ENCODE measurements at regions of chr2 and their contacts with region 1.

Region 1: DNA sequence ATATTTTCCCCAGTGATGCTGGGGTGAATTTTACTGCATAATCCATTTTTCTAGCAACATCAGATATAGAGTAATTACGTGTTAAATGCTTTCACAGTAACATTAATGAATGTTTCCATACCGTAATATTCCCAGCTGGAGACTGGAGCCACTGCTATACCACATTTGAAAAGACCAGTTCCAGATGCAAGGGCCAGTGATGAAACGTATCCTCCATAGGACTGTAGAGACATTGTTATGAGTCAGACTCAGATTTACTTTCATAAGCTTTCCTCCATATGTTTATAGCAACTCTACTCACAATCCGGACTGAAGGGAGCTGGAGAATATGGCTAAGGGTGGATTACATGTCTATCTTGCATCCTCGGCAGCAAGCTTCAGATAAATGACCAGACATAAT is 22.7 kb upstream of the GCG start:
- DNase-seq: peak; percentile 85
- ATAC-seq: peak; percentile 74
- H3K4me3 ChIP-seq: no peak overlapping the region
- H3K27ac ChIP-seq: no peak overlapping the region
- H3K4me1 ChIP-seq: peaks cover 8% of the 10 kb centered on the region
- H3K27me3 ChIP-seq: no peaks in the 10 kb centered on the region
- CTCF ChIP-seq: no peak
- POLR2A ChIP-seq: no peak
- RAD21 ChIP-seq: no peak

Region 2: DNA sequence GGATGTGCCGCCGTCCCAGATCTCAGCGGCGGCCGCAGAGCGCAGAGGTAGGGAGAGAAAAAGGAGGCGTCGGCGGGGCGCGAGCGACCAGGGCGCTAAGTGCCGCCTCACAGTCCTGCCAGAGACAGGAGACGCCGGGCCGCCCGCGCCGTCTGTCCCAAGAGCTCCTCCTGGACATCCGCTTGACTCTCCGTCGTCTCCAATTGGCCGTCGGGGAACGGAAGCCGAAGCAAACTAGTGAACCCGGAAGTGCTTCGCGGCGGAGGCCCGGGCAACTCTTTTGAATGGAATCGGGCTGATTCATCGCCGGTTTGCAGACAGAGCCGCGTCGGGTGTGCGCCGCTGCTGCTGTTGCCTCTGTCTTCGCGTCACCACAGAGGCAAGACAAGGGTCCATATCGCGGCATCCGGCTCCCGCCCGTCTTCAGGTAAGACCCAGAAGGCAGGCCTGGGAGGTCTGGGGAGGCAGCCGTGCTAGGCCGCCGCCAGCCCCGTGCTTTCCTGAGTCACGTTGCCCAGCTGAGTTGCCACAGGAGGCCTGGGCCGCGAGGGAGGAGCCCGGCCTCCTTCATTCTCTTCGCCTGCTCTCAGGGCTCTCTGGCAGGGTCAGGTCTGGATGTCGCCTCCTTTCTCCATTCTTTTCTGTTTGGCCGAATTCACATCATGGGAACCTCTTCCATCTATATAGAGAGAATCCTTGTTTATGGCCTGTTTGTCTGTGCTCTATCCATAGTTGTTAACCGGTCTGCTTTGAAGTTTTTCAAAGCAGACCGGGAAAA is 866.4 kb before region 1 on chr2 and contains the start of gene PSMD14:
- CTCF ChIA-PET with region 1: no interaction called
- POLR2A ChIA-PET with region 1: no interaction called
- dilution Hi-C with region 1: no loop called
- in situ Hi-C with region 1: no loop called
- intact Hi-C with region 1: no loop called
- DNase-seq: peak; percentile 94
- ATAC-seq: peak; percentile 97
- H3K4me3 ChIP-seq: peak within 1 kb of the TSS; percentile 86
- H3K27ac ChIP-seq: peak within 1 kb of the TSS; percentile 89
- H3K4me1 ChIP-seq: peaks cover 3% of the 10 kb centered on the region; the same call in 1 of the 2 replicates
- H3K27me3 ChIP-seq: no peaks in the 10 kb centered on the region
- CTCF ChIP-seq: no peak
- POLR2A ChIP-seq: peak; percentile 95
- RAD21 ChIP-seq: no peak
- total RNA-seq, gene PSMD14: 110 and 191 TPM in 2 replicates

Region 3: GRCh38 chr2:162188451-162188850 is 13.7 kb after region 1 on chr2:
- CTCF ChIA-PET with region 1: interaction called, 4 read pairs
- POLR2A ChIA-PET with region 1: no interaction called
- dilution Hi-C with region 1: no loop called
- in situ Hi-C with region 1: no loop called
- intact Hi-C with region 1: loop called (anchors 2 kb)
- DNase-seq: no peak
- ATAC-seq: no peak
- H3K4me3 ChIP-seq: no peak overlapping the region
- H3K27ac ChIP-seq: no peak overlapping the region
- H3K4me1 ChIP-seq: no peaks in the 10 kb centered on the region
- H3K27me3 ChIP-seq: no peaks in the 10 kb centered on the region
- CTCF ChIP-seq: no peak
- POLR2A ChIP-seq: no peak
- RAD21 ChIP-seq: no peak

Measured in IMR-90 (cell line).